Activated CD4-positive, alpha-beta T cell treated with anti-CD3 and anti-CD28 coated beads for 36 hours (primary cell): ENCODE measurements at regions of chr12 and their contacts with region 1.

Region 1: DNA sequence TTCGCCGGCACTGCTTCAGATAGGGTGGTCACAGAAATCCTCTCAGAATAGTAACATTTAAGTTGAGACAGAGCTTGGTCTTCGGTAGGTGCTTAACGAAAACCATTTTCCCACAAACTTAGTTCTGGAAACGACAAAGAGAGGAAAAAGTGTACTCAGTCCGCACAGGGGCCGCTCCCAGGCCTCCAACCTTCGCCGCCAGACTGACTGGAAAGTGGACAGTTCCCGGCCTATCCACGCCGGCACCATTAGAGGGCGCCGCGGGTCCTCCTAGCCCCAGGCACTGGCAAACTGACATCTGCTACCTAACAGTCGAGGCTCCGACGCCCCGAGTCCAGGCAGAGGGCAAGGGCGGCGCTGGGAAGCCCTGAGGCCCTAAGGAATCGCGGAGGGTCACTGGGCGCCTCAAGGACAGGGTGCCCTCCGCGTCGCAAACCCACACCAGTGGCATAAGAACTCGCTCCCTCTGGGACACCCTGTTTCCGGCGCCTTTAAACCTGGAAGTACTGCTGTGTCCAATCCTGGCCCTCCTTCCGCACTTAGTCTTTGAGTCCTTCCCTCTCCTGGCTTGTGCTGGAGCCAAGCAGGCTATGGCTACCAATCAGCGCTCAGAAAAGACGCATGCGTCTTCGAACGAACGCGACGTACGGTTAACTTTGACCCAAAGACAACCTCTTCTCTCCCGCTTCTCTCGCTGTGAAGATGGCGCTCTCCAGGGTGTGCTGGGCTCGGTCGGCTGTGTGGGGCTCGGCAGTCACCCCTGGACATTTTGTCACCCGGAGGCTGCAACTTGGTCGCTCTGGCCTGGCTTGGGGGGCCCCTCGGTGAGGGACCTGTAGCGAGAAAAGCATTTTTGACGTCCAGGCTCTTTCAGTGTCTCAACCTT is at the start of gene LETMD1:
- DNase-seq: peak; percentile 94
- ATAC-seq: peak; percentile 98
- H3K4me3 Mint-ChIP-seq: peak within 1 kb of the TSS; percentile 92
- H3K27ac Mint-ChIP-seq: peak within 1 kb of the TSS; percentile 92
- H3K4me1 Mint-ChIP-seq: peaks cover 23% of the 10 kb centered on the region
- H3K27me3 Mint-ChIP-seq: no peaks in the 10 kb centered on the region
- total RNA-seq, gene LETMD1: 69.6 to 79.6 TPM

Region 2: DNA sequence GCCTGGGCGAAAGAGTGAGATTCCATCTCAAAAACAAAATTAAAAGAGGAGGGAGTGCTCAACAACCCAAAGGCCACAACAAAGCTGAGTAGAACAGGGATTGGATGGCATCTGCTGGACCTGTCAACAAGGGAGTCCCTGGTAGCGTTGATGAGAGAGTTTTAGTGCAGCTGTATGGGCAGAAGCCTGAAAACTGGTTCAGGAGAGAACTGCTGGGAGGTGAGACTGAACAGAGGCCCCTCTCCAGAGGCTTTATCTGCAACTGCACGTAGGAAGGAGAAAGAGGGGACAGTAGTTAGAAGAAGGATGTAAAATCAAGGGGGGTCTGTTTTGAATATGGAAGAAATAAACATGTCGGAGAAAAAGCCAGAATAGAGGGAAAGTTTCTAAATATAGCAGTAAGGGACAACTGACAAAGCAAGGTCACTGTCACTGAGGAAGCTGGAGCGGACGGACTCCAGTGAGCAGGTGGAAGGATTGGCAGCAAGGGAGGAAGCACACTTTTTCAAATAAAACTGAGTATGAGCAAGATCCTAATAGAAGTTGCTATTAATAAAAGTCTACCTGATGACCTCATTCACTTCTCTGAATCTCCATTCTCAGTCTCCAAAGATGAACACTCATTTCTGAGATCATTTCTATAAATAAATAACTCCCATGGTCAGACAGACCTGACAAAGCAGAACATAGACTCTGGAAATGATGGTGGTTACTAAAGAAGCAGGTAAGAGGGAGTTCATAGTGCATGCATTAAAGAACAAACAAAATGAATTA is 295.8 kb before region 1 on chr12:
- CTCF ChIA-PET with region 1: no interaction called
- POLR2A ChIA-PET with region 1: no interaction called
- intact Hi-C with region 1: no loop called
- DNase-seq: no peak
- ATAC-seq: peak; percentile 44
- H3K4me3 Mint-ChIP-seq: no peak overlapping the region
- H3K27ac Mint-ChIP-seq: no peak overlapping the region
- H3K4me1 Mint-ChIP-seq: no peaks in the 10 kb centered on the region
- H3K27me3 Mint-ChIP-seq: no peaks in the 10 kb centered on the region

Region 3: GRCh38 chr12:50825372-50825838 is 222.5 kb before region 1 on chr12:
- CTCF ChIA-PET with region 1: no interaction called
- POLR2A ChIA-PET with region 1: interaction called, 3 read pairs
- intact Hi-C with region 1: loop called in 1 of 2 experiments (anchors 5 kb)
- DNase-seq: no peak
- ATAC-seq: peak; percentile 61
- H3K4me3 Mint-ChIP-seq: no peak overlapping the region
- H3K27ac Mint-ChIP-seq: peak overlapping the region; percentile 35
- H3K4me1 Mint-ChIP-seq: peaks cover 6% of the 10 kb centered on the region
- H3K27me3 Mint-ChIP-seq: no peaks in the 10 kb centered on the region

Region 4: GRCh38 chr12:51083126-51083833 is 35.4 kb after region 1 on chr12 and contains the start of gene CSRNP2:
- CTCF ChIA-PET with region 1: interaction called, 3 read pairs
- POLR2A ChIA-PET with region 1: interaction called, 4 read pairs
- intact Hi-C with region 1: loop called (anchors 1 kb)
- DNase-seq: peak; percentile 97
- ATAC-seq: peak; percentile 99
- H3K4me3 Mint-ChIP-seq: peak within 1 kb of the TSS; percentile 95
- H3K27ac Mint-ChIP-seq: peak within 1 kb of the TSS; percentile 86
- H3K4me1 Mint-ChIP-seq: peaks cover 46% of the 10 kb centered on the region
- H3K27me3 Mint-ChIP-seq: no peaks in the 10 kb centered on the region
- total RNA-seq, gene CSRNP2: 12.8 to 13.6 TPM

Region 5: DNA sequence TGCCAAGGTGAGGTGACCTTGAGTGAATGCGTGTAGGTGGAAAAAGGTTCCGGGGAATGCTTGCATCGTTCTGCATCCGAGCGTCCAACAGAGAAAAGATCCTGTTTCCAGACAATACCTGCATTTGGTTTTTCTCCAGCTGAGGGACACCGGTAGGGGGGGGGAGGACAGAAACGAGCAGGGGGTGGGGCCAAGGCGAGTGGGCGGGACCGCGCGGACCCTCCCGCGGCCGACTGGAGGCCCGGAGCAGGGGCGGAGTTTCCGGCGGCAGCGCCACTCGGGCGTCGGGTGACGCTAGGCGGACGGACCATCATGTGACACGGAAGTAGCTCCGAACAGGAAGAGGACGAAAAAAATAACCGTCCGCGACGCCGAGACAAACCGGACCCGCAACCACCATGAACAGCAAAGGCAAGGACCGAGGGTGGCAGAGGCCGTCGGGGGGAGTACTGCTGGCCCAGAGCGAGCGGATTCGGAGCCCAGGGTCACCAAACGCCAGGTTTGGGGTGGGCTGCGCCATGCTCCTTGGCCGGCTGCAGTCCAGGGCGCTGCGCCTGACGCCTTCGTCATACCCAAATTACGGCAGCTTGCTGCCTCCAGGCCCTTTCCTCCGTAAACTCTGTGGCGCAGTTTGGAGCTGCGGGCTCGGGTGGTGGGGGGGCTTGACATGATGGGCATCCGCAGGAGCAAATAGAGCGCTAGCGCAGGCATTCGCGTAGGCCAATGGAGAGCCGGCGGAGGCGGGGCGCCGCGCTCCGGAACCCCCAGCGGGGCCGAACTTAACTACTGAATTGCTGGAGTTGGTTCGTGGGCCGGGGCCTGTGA is 190.8 kb after region 1 on chr12 and contains the start of gene DAZAP2:
- CTCF ChIA-PET with region 1: interaction called, 3 read pairs
- POLR2A ChIA-PET with region 1: interaction called, 3 read pairs
- intact Hi-C with region 1: loop called (anchors 1 to 2 kb)
- DNase-seq: peak; percentile 98
- ATAC-seq: peak; percentile 92
- H3K4me3 Mint-ChIP-seq: peak within 1 kb of the TSS; percentile 87
- H3K27ac Mint-ChIP-seq: peak within 1 kb of the TSS; percentile 100
- H3K4me1 Mint-ChIP-seq: peaks cover 36% of the 10 kb centered on the region
- H3K27me3 Mint-ChIP-seq: no peaks in the 10 kb centered on the region
- total RNA-seq, gene DAZAP2: 94.8 to 95.2 TPM

Region 6: GRCh38 chr12:51270067-51270970 is 222.4 kb after region 1 on chr12 and contains the start of gene SMAGP:
- CTCF ChIA-PET with region 1: no interaction called
- POLR2A ChIA-PET with region 1: interaction called, 7 read pairs
- intact Hi-C with region 1: loop called in 1 of 2 experiments (anchors 5 kb)
- DNase-seq: peak; percentile 57
- ATAC-seq: peak; percentile 41
- H3K4me3 Mint-ChIP-seq: peak within 1 kb of the TSS; percentile 78
- H3K27ac Mint-ChIP-seq: no peak within 1 kb of the TSS
- H3K4me1 Mint-ChIP-seq: peaks cover 18% of the 10 kb centered on the region
- H3K27me3 Mint-ChIP-seq: peaks cover 14% of the 10 kb centered on the region
- total RNA-seq, gene SMAGP: 0.69 to 0.86 TPM